Dorsolateral prefrontal cortex (tissue), 120 donors: ENCODE measurements at regions of chr11 and their contacts with region 1.

Region 1: DNA sequence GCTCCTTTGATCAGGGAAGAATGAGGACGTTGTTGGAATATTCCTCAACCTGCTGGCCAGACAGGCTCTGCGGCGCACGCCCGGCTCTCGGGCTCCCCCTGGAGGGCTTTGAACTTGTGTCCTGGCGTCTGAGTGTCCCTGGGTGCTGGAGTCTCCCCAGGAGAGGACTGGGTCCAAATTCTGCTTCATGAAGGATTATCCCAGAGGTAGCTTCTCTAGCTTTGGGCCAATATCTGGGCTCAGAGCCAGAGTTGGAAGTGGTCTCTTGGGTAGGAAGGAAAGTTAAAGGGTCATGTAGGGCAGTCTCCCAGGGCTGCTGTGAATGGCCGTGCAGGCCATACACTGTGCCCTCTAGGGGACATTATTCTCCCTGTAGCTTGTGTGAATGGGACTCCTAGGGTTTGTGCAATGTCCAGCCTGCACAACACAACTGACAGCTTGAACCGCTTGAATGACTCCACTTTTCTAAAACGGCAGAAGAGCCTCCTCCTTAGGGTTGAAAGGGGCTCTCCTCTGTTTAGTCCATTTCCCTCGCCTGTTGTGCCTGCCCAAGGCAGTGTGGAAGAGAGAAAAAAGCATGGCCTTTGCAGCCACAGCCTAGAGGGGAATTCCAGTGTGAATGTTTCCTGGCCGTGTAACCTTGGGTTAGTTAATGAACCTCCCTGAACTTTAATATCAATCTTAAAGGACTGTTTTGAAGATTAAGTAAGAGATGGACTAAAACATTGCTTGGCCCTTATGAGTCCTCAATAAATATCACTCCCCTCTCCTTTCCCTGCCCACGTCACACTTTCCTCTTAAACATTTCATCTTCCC is 111.2 kb upstream of the THY1 start:
- DNase-seq: peak; percentile 76 to 90 (median 82)
- H3K4me3 ChIP-seq: peak overlapping the region in 3 of 59 donors; percentile 1 to 11 (median 5)
- H3K27ac ChIP-seq: peak overlapping the region in 29 of 59 donors; percentile 2 to 73 (median 41)
- H3K27me3 ChIP-seq: no peaks in the 10 kb centered on the region
- CTCF ChIP-seq: peak; percentile 66 to 99 (median 93)

Region 2: DNA sequence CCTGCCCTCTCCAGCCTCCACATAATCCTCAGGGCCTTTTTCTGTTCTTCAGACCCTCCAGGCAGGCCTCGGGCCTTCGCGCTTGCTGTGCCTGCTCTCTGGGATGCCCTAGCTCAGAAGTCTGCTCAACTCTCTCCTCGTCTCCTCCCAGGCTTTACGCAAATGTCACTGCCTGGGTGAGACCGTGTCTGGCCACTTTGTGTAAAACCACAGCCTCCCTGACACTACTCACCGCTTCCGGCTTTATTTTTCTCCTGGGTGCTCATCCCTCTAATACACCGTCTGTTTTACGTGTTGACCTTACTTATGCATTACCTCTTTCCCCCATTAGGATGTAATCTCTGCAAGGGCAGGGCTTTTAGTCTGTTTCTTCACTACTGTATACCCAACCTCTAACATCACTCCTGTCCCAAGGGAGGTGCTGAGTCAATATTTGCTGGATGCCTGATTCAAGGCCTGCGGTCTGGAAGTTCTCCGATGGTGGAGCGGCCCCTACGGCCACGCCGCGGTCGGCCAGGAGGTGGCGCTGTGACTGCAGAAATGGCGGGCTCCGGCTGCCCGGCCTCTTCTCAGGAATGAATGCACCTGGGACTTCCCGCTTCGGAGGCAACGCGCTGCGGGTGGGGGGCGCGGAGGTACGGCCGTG is 53.0 kb before region 1 on chr11:
- intact Hi-C with region 1: loop called (anchors 1 to 5 kb)
- DNase-seq: peak; percentile 67 to 93 (median 86)
- H3K4me3 ChIP-seq: peak overlapping the region in 43 of 59 donors; percentile 3 to 53 (median 33)
- H3K27ac ChIP-seq: peak overlapping the region in 3 of 59 donors; percentile 15 to 44 (median 22)
- H3K27me3 ChIP-seq: no peaks in the 10 kb centered on the region
- CTCF ChIP-seq: peak; percentile 87 to 100 (median 99)

Region 3: GRCh38 chr11:119599864-119600541 is 65.9 kb after region 1 on chr11:
- intact Hi-C with region 1: loop called in 1 of 2 experiments (anchors 5 kb)
- DNase-seq: no peak
- H3K4me3 ChIP-seq: no peak overlapping the region
- H3K27ac ChIP-seq: no peak overlapping the region
- H3K27me3 ChIP-seq: no peaks in the 10 kb centered on the region
- CTCF ChIP-seq: no peak

Region 4: GRCh38 chr11:119615003-119615881 is 81.1 kb after region 1 on chr11:
- intact Hi-C with region 1: loop called in 1 of 2 experiments (anchors 5 kb)
- DNase-seq: peak in 9 of 10 donors; percentile 64 to 90 (median 80)
- H3K4me3 ChIP-seq: no peak overlapping the region
- H3K27ac ChIP-seq: peak overlapping the region; percentile 34 to 99 (median 92)
- H3K27me3 ChIP-seq: no peaks in the 10 kb centered on the region
- CTCF ChIP-seq: peak in 5 of 56 donors; percentile 9 to 27 (median 17)

Region 5: DNA sequence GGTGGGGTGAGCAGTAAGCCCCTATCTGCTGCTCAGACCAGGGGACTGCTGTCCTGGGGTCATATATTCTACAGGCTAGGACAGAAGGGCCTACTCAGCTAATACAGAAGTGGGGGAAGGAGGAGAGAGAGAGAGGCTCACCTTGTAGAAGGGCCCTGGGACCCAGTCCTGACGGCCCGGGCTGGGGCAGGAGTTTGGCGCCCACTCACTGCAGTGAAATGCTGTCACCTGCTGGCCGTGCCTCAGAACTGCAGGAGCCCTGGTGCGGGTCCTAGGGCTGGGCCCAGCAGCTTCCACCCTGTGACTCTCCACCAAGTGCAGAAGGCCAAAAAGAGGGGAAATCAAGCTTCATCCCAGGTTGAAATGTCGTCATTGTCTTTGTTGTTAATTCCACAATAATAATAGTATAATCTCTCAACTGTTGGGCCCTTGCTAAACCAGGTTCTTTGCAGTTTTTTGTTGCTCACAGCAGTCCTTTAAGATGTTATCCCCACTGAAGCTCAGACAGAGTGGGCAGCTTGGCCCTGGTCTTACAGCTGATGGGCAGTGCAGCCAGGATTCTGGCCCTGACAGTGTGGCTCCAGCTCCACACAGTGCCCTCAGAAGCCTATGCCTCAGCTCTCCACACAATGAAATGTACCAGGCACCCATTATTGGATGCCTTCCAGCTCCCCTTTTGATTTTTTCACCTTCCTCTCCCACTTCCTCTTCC is 574.2 kb after region 1 on chr11:
- intact Hi-C with region 1: no loop called
- DNase-seq: peak; percentile 78 to 90 (median 84)
- H3K4me3 ChIP-seq: peak overlapping the region in 1 of 59 donors; percentile 6
- H3K27ac ChIP-seq: peak overlapping the region in 52 of 59 donors; percentile 3 to 86 (median 64)
- H3K27me3 ChIP-seq: peaks cover 0 to 3% (median 0%) of the 10 kb centered on the region in 45 donors
- CTCF ChIP-seq: peak; percentile 93 to 100 (median 100)